Natural killer cell (primary cell): ENCODE measurements at regions of chr13 and their contacts with region 1.

Region 1: DNA sequence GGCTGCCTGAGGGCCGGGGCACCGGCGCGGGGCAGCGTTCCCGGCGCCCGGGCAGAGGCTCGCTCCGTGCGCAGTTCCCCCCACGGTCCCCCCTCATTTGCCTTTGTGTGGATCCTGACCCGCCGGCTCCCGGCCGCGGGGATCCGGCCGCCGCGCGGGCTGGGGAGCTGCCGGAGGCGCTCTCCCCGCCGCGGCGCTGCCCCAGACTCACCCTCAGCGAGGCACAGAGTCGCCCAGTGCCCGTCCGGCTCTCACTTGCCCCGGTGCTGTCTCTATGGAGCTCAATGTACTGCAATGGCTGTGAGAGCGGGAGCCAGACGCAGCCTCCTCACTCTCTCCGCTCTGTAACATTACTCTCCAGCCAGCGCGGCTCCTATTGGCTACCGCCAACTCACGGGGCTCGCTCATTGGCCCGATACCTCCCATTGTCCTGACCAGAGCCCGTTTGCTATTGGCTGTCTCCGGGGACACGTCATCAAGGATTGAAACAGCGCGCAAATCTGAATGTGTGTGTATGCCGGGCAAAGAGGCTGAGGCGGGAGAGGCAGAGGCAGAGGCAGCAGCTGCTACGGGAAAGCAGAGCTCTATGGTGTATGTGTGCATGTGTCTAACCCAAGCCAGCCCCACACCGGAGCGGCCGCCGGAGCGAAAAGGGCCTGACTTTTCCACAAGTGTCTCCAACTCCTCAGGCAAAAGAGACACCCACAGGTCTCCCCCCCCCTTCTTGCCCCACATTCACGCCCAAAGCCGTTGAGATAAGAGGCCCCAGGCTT is at the start of gene HMGB1:
- DNase-seq: peak; percentile 97 to 98
- ATAC-seq: peak; percentile 77 to 91 (median 82)
- H3K4me3 ChIP-seq: peak within 1 kb of the TSS; percentile 59
- H3K4me3 Mint-ChIP-seq: peak within 1 kb of the TSS; percentile 96
- H3K27ac ChIP-seq: peak within 1 kb of the TSS; percentile 50
- H3K27ac Mint-ChIP-seq: peak within 1 kb of the TSS; percentile 96 to 98
- H3K4me1 ChIP-seq: peaks cover 13% of the 10 kb centered on the region
- H3K4me1 Mint-ChIP-seq: peaks cover 36 to 44% of the 10 kb centered on the region in 2 donors
- H3K27me3 ChIP-seq: no peaks in the 10 kb centered on the region
- H3K27me3 Mint-ChIP-seq: no peaks in the 10 kb centered on the region
- CTCF ChIP-seq: no peak
- total RNA-seq, gene HMGB1: 397 to 449 (median 409) TPM

Region 2: GRCh38 chr13:30145709-30146367 is 319.9 kb before region 1 on chr13:
- intact Hi-C with region 1: loop called (anchors 5 kb)
- DNase-seq: peak in 1 of 2 donors; percentile 28
- ATAC-seq: no peak
- H3K4me3 ChIP-seq: no peak overlapping the region
- H3K4me3 Mint-ChIP-seq: peak overlapping the region; percentile 66
- H3K27ac ChIP-seq: peak overlapping the region; percentile 79
- H3K27ac Mint-ChIP-seq: peak overlapping the region; percentile 95 to 97
- H3K4me1 ChIP-seq: peaks cover 83% of the 10 kb centered on the region
- H3K4me1 Mint-ChIP-seq: peaks cover 91 to 93% of the 10 kb centered on the region in 2 donors
- H3K27me3 ChIP-seq: no peaks in the 10 kb centered on the region
- H3K27me3 Mint-ChIP-seq: no peaks in the 10 kb centered on the region
- CTCF ChIP-seq: no peak

Region 3: DNA sequence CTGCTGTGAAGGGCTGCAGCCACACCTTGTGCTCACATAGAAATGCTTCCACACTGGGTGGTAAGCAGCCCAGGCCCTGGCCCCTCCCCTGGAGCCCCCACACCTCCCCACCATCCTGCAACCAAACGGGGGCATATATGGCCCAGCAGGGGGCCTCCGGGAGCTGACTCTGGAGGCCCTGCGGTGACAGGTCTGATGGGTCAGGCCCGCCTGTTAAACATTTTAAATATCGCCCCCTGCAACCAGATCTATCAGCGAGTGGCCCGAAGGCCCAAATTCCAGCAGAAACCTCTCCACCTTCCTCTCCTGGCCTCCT is 110.4 kb before region 1 on chr13:
- intact Hi-C with region 1: loop called (anchors 1 kb)
- DNase-seq: peak; percentile 51 to 65
- ATAC-seq: peak; percentile 58 to 94 (median 85)
- H3K4me3 ChIP-seq: no peak overlapping the region
- H3K4me3 Mint-ChIP-seq: no peak overlapping the region
- H3K27ac ChIP-seq: no peak overlapping the region
- H3K27ac Mint-ChIP-seq: no peak overlapping the region
- H3K4me1 ChIP-seq: peaks cover 18% of the 10 kb centered on the region
- H3K4me1 Mint-ChIP-seq: peaks cover 7 to 17% of the 10 kb centered on the region in 2 donors
- H3K27me3 ChIP-seq: no peaks in the 10 kb centered on the region
- H3K27me3 Mint-ChIP-seq: peaks cover 0 to 3% of the 10 kb centered on the region in 2 donors
- CTCF ChIP-seq: peak; percentile 51

Region 4: DNA sequence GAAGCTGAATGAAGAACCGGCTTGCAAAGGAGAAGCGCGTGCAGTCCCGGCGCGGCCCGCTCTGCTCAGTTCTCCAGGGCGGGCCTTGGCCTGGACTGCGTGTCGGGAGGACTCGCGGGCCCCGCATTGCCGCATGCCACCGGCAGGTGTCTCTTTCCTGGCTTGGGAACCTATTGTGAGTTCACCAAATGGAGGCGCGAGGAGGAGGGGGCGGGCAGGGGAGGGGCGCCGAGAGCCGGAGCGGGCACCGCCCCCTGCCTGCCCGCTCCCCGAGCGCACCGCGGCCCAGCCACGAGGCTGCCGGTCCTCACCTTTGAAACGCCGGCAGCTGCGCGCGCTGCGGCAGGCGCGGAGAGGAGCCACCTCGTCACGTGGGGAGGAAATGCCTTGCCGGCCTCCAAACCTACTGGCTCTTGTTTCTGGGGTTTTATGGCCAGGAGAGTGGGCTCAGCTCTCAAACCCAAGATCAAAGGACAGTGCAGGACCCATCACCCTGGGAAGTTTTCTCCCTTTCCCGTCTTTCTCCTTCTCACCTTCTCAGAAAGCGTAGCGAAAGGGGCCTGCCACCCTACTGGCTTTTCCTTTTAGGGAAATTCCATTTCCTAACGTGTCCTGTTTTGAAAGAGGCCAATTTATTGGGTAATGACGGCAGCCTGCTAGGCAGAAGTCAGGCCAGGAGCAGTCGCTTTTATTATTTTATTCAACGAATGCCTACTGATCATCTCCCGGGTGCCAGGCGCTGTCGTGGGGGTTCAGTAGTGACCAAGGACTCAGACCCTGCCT is 57.3 kb before region 1 on chr13:
- intact Hi-C with region 1: loop called (anchors 1 kb)
- DNase-seq: peak; percentile 78 to 94
- ATAC-seq: peak; percentile 80 to 94 (median 91)
- H3K4me3 ChIP-seq: peak overlapping the region; percentile 29
- H3K4me3 Mint-ChIP-seq: peak overlapping the region; percentile 86
- H3K27ac ChIP-seq: peak overlapping the region; percentile 66
- H3K27ac Mint-ChIP-seq: peak overlapping the region; percentile 81
- H3K4me1 ChIP-seq: peaks cover 25% of the 10 kb centered on the region
- H3K4me1 Mint-ChIP-seq: peaks cover 26 to 31% of the 10 kb centered on the region in 2 donors
- H3K27me3 ChIP-seq: no peaks in the 10 kb centered on the region
- H3K27me3 Mint-ChIP-seq: no peaks in the 10 kb centered on the region
- CTCF ChIP-seq: peak; percentile 57

Region 5: DNA sequence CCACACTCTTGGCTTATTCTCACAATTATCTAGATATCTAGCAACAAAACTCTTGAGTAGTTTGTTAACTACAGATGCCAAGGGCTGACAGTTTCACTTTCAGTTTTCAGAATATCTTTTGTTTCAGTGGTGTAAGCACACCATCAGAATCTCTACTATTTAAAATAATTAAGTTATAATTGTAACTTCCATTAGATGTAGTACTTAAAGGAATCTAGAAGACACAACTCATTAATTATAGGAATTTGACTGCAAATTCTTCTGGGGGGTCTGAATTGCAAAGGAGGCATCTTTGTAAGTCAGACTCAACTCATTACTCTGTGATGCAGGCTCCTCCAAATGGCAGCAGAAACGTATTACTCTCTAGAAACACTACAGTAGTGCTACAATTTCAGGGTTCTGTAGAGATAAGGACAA is 107.1 kb after region 1 on chr13:
- intact Hi-C with region 1: loop called (anchors 10 kb)
- DNase-seq: peak in 1 of 2 donors; percentile 67
- ATAC-seq: peak; percentile 69 to 77 (median 69)
- H3K4me3 ChIP-seq: peak overlapping the region; percentile 5
- H3K4me3 Mint-ChIP-seq: peak overlapping the region; percentile 75
- H3K27ac ChIP-seq: peak overlapping the region; percentile 66
- H3K27ac Mint-ChIP-seq: peak overlapping the region; percentile 80 to 83
- H3K4me1 ChIP-seq: peaks cover 25% of the 10 kb centered on the region
- H3K4me1 Mint-ChIP-seq: peaks cover 33 to 40% of the 10 kb centered on the region in 2 donors
- H3K27me3 ChIP-seq: no peaks in the 10 kb centered on the region
- H3K27me3 Mint-ChIP-seq: peaks cover 21 to 25% of the 10 kb centered on the region in 2 donors
- CTCF ChIP-seq: no peak